ENCODE measurements at regions of chr13 and their contacts with region 1.

Region 1: DNA sequence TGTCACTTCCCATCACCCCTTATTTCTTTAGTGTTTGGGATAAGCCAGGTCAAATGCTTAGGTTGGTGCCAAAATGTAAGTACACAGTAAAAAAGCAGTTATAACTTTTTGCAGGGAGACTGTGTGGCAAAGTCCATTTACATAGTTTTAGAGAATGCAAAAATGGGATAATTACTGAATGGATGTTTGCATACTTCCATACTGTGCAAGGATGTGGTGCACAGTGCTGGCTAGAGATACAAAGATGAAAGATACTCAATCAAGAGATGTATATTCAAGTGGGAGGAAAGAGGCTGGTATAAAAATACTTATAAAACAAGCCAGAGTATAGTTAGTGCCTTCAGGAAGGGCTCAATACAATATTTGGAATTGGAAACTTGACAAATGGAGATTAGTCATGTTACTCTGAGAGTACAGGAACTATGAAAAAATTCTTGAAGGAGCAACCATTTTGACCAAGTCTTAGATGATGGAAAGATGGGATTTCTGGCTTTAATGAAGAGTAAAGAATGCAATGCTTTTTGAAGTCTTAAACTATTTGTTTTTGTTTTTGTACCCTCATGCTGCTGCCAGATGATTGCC is 8.0 kb downstream of the PDS5B start:
- DNase-seq: no peak

Region 2: DNA sequence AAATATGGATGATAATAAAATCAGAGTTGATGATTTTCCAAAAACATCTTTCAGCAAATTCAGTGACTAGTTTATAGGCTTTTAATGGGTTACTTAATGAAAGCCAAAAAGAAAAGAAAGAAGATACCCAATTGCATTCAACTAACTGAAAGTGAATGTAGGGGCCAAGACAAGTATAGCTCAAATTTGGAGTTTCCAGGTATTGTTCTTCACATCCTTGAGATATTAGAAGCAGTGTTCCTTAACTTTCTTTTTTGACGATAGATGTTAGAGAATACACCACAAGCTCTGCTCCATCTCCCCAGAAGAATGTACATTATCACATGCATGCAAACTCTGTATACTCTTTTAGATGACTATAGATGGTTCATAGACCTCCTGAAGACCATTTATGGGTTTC is 35.6 kb after region 1 on chr13:
- intact Hi-C with region 1: loop called (anchors 1 to 5 kb)
- DNase-seq: no peak

Measured in posterior vena cava (tissue), 2 donors.